ENCODE measurements at regions of chr5 and their contacts with region 1.

Region 1: GRCh38 chr5:97044052-97044451 is 98.4 kb downstream of the LIX1 start:
- DNase-seq: peak in 2 of 4 experiments; percentile 17 to 44
- ATAC-seq: peak; percentile 85
- H3K4me3 ChIP-seq: no peak overlapping the region
- H3K27ac ChIP-seq: no peak overlapping the region
- H3K4me1 ChIP-seq: no peaks in the 10 kb centered on the region; a peak in 2 of 5 replicates
- H3K27me3 ChIP-seq: no peaks in the 10 kb centered on the region; a peak in 1 of 5 replicates
- CTCF ChIP-seq: peak; percentile 62 to 68 (median 63)
- EP300 ChIP-seq: no peak
- POLR2A ChIP-seq: no peak
- RAD21 ChIP-seq: peak; percentile 55 to 76

Region 2: DNA sequence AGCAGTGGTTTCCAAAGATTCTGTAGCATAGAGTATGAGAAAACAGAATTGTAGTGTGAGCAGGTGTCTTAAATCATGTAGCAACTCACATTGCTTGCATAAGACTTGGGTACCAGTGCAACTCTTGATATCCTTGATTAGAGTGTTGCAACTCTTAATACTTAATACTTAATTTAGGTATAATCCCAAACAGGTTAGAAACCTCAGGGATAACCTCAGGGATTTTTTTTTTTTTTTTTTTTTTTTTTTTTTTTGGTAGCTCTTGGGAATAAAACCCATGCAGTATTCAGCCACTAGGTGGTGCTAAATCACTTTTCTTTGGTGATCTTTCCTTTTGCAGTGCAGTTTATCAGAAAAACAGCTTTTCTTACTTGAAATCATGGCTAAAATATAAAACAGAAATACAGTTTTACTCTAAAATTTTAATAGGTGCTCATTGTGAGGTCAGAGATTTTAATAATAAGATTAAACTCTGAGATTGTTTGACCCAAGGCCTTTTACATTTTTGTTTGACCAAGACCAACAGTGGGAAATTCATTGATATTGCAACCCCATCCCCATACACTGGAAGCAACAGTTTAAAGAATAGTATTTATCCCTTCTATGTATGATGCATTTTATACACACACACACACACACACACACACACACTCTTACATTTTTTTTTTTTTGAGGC is 291.6 kb before region 1 on chr5:
- CTCF ChIA-PET with region 1: no interaction called
- POLR2A ChIA-PET with region 1: no interaction called
- in situ Hi-C with region 1: no loop called
- intact Hi-C with region 1: loop called (anchors 5 kb)
- DNase-seq: peak; percentile 47 to 76 (median 49)
- ATAC-seq: peak; percentile 68; the same call in 2 of the 3 replicates
- H3K4me3 ChIP-seq: no peak overlapping the region
- H3K27ac ChIP-seq: no peak overlapping the region
- H3K4me1 ChIP-seq: no peaks in the 10 kb centered on the region
- H3K27me3 ChIP-seq: no peaks in the 10 kb centered on the region
- CTCF ChIP-seq: peak; percentile 41 to 74 (median 42); a peak in 4 of 6 replicates
- EP300 ChIP-seq: no peak
- POLR2A ChIP-seq: no peak
- RAD21 ChIP-seq: peak; percentile 50 to 55

Region 3: DNA sequence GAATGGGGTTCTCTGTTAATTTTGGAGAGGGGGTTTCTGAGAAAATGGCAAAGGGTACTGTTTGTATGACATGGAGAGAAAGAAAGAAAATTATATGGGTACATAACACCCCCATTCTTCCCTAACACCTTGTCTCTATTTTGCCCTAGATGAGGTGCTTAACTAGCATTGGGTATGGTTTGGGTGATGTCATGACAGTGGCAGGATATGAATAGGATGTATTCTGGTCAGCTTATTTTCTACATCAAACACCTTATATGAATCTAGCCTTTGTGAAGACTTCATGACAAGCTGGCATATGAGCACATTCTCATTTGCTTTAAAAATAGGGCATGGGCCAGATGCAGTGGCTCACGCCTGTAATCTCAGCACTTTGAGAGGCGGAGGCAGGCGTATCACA is 49.6 kb before region 1 on chr5:
- CTCF ChIA-PET with region 1: no interaction called
- POLR2A ChIA-PET with region 1: no interaction called
- in situ Hi-C with region 1: no loop called
- intact Hi-C with region 1: no loop called
- DNase-seq: no peak
- ATAC-seq: no peak
- H3K4me3 ChIP-seq: no peak overlapping the region
- H3K27ac ChIP-seq: no peak overlapping the region
- H3K4me1 ChIP-seq: no peaks in the 10 kb centered on the region
- H3K27me3 ChIP-seq: no peaks in the 10 kb centered on the region
- CTCF ChIP-seq: no peak
- EP300 ChIP-seq: no peak
- POLR2A ChIP-seq: no peak
- RAD21 ChIP-seq: no peak

Region 4: DNA sequence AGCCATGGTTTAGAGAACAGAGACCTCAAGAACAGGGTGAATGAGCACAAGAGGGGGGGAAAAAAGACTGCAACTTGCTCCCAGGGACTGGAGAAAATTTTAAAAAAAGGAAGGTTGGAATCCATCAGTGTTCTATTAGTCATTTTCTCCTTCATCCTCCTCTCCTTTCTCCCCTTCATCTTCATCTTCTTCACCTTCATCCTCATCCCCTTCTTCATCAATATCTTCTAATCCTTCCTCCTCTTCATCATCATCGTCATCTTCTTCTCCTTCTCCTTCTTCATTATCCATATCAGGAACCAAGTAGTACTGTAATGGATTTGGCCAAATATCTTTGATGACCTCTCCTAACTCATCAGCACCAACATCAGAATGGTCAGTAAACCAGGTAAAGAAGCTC is 12.2 kb after region 1 on chr5:
- CTCF ChIA-PET with region 1: no interaction called
- POLR2A ChIA-PET with region 1: no interaction called
- in situ Hi-C with region 1: no loop called
- intact Hi-C with region 1: no loop called
- DNase-seq: no peak
- ATAC-seq: no peak
- H3K4me3 ChIP-seq: no peak overlapping the region
- H3K27ac ChIP-seq: no peak overlapping the region
- H3K4me1 ChIP-seq: no peaks in the 10 kb centered on the region
- H3K27me3 ChIP-seq: no peaks in the 10 kb centered on the region; a peak in 1 of 5 replicates
- CTCF ChIP-seq: no peak
- EP300 ChIP-seq: no peak
- POLR2A ChIP-seq: no peak
- RAD21 ChIP-seq: no peak

Region 5: GRCh38 chr5:97134634-97135033 is 90.6 kb after region 1 on chr5:
- CTCF ChIA-PET with region 1: no interaction called
- POLR2A ChIA-PET with region 1: no interaction called
- in situ Hi-C with region 1: loop called (anchors 5 kb)
- intact Hi-C with region 1: no loop called
- DNase-seq: no peak
- ATAC-seq: no peak
- H3K4me3 ChIP-seq: no peak overlapping the region
- H3K27ac ChIP-seq: no peak overlapping the region
- H3K4me1 ChIP-seq: peaks cover 0 to 9% of the 10 kb centered on the region in 2 experiments; a peak in 2 of 5 replicates
- H3K27me3 ChIP-seq: no peaks in the 10 kb centered on the region
- CTCF ChIP-seq: no peak
- EP300 ChIP-seq: no peak
- POLR2A ChIP-seq: no peak
- RAD21 ChIP-seq: no peak

Region 6: GRCh38 chr5:97142521-97143254 is 98.6 kb after region 1 on chr5 and contains the start of gene LIX1:
- CTCF ChIA-PET with region 1: interaction called, 8 read pairs
- POLR2A ChIA-PET with region 1: interaction called, 3 read pairs
- in situ Hi-C with region 1: loop called (anchors 5 kb)
- intact Hi-C with region 1: loop called (anchors 1 kb)
- DNase-seq: peak in 2 of 4 experiments; percentile 35 to 54
- ATAC-seq: peak; percentile 95
- H3K4me3 ChIP-seq: no peak within 1 kb of the TSS
- H3K27ac ChIP-seq: no peak within 1 kb of the TSS
- H3K4me1 ChIP-seq: no peaks in the 10 kb centered on the region
- H3K27me3 ChIP-seq: no peaks in the 10 kb centered on the region
- CTCF ChIP-seq: peak; percentile 56 to 78 (median 63)
- EP300 ChIP-seq: no peak
- POLR2A ChIP-seq: no peak
- RAD21 ChIP-seq: peak; percentile 78
- polyA plus RNA-seq, gene LIX1: 0.01 to 0.18 TPM

Measured in K562 (cell line).